Head of caudate nucleus (tissue), 42 donors: ENCODE measurements at regions of chr9 and their contacts with region 1.

Region 1: DNA sequence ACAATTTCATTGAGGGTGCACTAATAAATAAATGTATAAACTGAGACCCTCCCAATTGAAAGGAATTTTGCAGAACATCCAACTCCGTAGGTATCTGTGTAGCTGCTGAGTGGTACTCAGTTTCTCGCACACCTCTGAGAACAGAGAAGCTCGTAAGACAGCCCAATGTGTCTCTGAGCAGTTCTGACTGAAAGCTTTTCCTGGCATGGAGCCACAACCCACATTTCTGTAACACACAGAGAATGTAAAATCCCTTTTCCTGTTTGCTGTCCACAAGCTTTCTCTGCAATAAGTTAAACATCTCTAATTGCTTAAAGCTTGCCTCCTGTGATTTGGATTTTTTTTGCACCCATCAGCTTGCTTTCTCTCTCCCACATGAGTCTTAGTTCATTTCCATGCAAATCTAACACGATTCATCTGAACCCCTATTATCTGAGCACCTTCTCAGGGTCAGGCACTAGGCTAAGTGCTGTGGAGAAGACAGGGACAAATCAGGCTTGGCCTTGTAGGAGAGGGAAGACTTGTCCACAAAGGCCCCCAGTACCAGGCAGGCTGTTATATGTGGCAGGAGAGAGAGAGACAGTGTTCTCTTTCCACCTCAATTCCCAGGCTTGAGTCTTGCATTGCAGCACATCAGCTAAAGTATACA is 44.2 kb upstream of the COL15A1 start:
- DNase-seq: peak in 2 of 42 donors; percentile 24 to 36

Region 2: DNA sequence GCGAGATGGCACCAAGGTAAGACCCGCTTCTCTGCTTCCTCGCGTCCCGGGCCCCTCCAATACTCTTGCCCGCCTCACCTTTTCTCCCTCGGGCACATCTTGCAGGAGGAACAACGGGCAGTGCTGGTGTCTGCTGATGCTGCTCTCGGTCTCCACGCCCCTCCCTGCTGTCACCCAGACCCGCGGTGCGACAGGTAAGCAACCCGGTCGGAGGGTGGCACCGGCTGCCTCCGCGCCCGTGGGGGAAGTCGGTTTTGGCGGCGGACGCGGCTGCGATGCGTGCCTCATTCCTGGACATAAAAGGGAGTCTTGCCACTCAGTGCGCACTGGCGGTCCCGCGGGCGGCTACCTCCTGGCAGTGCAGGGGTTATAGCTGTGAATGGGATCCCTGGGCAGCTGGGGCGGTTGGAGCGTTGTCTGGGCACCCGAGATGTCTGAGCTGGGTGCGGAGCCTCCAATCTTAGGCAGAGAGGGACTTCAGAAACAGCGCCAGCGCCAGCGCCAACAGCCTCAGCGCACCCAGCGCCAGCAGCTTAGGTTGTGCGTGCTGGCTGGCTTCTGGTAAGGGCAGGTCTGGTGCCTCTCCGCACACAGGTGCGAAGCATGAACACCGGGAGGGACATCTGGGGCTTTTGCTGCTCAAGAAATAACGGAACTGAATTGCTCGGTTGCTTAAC is 44.7 kb after region 1 on chr9:
- intact Hi-C with region 1: loop called (anchors 10 kb)
- DNase-seq: peak in 14 of 42 donors; percentile 8 to 48 (median 23)